Gastrocnemius medialis (tissue), 4 donors: ENCODE measurements at regions of chr6 and their contacts with region 1.

Region 1: DNA sequence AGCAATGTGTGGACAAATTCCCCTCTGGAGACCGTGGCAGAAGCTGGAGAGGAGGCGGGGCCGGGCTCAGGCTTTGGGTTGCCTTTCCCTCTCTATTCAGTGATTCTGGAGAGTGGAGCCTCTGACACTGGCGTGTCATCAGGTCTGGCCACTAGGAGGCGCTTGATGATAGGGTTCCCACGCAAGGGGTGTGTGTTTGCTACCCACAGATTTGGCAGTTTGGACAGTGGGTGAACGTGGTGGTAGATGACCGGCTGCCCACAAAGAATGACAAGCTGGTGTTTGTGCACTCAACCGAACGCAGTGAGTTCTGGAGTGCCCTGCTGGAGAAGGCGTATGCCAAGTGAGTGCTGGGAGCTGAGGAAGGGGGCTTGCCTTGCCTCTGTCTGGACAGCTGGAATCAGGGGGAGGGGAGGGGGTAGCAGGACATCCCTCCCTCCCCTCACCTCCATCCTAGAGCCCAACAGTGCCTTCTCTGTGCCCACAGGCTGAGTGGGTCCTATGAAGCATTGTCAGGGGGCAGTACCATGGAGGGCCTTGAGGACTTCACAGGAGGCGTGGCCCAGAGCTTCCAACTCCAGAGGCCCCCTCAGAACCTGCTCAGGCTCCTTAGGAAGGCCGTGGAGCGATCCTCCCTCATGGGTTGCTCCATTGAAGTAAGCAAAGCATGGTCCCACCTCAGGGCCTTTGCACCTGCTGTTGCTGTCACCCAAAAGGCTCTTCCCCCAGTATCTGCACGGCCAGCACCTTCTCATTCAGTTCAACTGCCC is 14.3 kb downstream of the CAPN11 start:
- DNase-seq: peak; percentile 65 to 80
- ATAC-seq: peak; percentile 95 to 96
- H3K4me3 ChIP-seq: no peak overlapping the region
- H3K27ac ChIP-seq: no peak overlapping the region
- H3K4me1 ChIP-seq: peaks cover 0 to 7% of the 10 kb centered on the region in 2 donors
- H3K27me3 ChIP-seq: no peaks in the 10 kb centered on the region
- CTCF ChIP-seq: peak; percentile 85 to 96 (median 92)
- POLR2A ChIP-seq: no peak

Region 2: DNA sequence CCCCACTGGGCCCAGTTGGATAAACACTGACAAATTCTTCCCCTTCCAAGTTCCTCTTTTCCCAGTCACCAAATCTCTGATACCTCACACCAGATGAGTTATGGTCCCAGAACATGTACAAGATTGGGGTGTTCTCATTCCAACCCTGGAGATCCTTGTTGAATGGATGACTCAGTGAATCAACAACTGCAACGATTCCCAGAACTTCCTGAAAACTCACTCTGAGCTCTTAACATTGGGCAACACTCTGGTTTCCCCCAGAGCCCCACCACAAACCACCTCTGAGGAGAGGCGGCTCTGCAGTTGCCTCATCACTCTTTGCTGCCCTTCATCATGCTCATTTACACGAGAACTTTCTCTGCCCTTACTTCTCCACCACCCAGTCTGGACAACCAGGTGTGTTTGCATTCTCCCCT is 160.8 kb before region 1 on chr6:
- in situ Hi-C with region 1: no loop called
- intact Hi-C with region 1: no loop called
- DNase-seq: no peak
- ATAC-seq: no peak
- H3K4me3 ChIP-seq: no peak overlapping the region
- H3K27ac ChIP-seq: peak overlapping the region in 1 of 4 donors; percentile 93
- H3K4me1 ChIP-seq: peaks cover 22 to 26% of the 10 kb centered on the region in 2 donors
- H3K27me3 ChIP-seq: no peaks in the 10 kb centered on the region
- CTCF ChIP-seq: no peak
- POLR2A ChIP-seq: no peak

Region 3: DNA sequence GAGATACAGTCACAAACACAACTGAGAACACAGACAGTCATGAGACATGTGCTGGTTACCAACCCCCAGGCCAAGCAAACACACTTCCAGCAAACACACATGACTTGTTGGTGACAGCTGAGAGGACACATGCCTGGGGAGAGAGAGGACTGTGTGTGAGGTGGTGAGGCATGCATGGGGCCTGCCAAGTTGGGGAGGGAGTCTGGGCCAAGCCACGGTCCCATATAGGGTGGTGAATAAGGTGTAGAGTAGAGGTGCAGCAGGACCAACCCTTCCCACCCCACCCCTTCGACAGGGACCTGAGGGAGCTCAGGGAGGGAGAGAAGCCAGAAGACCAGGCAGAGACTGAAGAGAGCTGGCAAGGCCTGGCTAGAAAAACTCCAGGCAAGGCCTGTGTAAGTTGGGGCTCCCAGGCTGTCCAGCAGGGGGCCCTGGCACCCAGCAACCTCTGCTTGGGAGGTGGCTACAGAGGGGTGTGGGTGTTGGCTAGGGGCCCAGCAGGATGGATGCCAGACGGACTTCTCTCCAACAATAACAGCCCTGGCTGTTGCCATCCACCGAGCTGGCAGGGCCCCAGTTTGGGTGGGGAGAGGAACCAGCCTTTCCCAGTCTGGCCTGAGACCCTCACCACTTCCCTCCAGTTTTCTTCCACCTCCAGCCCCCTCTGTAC is 48.5 kb after region 1 on chr6:
- in situ Hi-C with region 1: no loop called
- intact Hi-C with region 1: loop called (anchors 5 kb)
- DNase-seq: peak; percentile 94 to 96
- ATAC-seq: peak; percentile 77 to 79
- H3K4me3 ChIP-seq: peak overlapping the region in 2 of 4 donors; percentile 21 to 62
- H3K27ac ChIP-seq: peak overlapping the region; percentile 95 to 99 (median 98)
- H3K4me1 ChIP-seq: peaks cover 71 to 88% of the 10 kb centered on the region in 2 donors
- H3K27me3 ChIP-seq: no peaks in the 10 kb centered on the region
- CTCF ChIP-seq: peak; percentile 51 to 89 (median 72)
- POLR2A ChIP-seq: peak; percentile 49 to 58

Region 4: DNA sequence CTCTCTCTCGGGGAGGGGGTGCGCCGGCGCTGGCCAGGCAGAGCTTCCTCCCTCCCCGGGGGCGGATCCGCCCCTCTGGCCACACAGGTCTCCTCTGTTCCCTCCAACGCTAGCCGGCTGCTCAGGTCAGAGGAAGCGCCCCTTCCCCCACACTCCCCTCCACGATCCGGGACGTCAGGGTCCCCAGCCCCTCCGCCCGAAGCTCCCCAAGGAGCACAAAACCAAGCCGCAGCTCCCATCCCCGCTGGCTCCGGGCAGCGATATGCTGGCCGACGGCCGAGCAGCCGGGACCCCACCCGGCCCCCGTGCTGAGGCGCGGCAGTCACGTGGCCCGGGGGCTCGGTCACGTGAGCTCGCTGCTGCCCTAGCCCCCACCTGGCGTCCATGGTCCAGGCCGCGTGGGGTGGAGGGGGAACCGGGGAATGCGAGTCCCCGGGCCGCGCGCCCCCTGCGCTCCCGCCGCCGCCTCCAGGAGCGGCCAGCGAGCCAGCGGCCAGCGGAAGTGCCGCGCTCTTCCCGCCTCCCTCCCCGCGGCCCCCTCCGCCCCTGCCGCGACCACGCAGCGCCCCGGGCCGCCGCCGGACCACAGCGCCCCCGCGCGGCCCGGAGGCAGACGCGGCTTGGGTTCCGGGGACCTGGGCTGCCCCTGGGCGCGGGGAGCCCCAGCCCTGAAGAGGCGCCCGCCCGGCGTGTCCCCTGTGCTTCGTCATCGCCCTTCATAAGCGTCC is 84.3 kb after region 1 on chr6 and contains the start of gene SLC35B2:
- in situ Hi-C with region 1: no loop called
- intact Hi-C with region 1: loop called (anchors 1 kb)
- DNase-seq: peak in 1 of 2 donors; percentile 58
- ATAC-seq: peak; percentile 73 to 81
- H3K4me3 ChIP-seq: peak within 1 kb of the TSS; percentile 77 to 99 (median 88)
- H3K27ac ChIP-seq: peak within 1 kb of the TSS; percentile 87 to 97 (median 92)
- H3K4me1 ChIP-seq: peaks cover 8 to 12% of the 10 kb centered on the region in 2 donors
- H3K27me3 ChIP-seq: no peaks in the 10 kb centered on the region
- CTCF ChIP-seq: peak; percentile 54 to 99 (median 90)
- POLR2A ChIP-seq: peak; percentile 75 to 77
- total RNA-seq, gene SLC35B2: 14.9 to 35.9 (median 21.4) TPM

Region 5: DNA sequence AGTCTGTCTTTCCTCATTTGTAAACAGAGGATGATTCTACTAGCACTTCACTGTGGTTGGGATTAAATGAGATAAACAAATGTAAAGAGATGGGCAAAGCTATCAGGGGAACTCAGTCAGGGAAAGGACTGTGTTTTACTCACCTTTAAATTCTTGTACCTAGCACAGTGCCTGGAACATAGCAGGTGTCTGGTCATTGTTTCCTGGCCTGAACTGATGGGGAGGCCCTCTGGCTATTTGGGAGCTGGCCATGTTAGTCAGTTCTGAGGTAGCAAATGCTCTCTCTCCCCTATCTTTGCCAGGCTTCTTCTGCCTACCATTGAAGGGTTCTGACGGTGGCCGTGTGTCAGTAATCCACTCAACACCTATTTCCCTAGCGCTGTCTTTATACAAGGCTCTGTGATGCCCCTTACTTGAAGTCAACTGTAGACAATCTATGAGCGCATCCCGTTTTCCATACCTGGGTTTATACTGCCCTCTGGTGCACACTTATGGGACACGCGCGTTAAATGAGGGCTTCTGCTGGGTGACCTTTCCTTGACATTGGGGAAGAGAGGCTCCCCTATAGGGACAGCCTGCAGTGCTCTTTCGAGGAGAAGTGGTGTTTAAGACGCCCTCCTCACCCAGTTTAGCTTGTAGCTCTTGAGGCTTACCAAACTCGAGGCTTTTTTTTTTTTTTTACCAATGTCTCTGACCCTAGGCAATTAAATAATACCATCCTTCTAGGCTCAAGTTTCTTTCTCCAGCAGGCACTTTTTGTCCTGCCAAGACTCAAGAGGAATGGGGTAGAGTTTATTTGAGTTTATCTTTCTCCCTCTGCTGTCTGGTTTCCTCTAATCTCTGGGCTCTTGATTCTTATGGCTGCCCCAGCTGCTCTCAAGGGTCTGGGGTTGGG is 165.6 kb after region 1 on chr6:
- in situ Hi-C with region 1: loop called in 2 of 4 experiments (anchors 25 kb)
- intact Hi-C with region 1: loop called (anchors 5 kb)
- DNase-seq: peak; percentile 13 to 40
- ATAC-seq: peak; percentile 75 to 93
- H3K4me3 ChIP-seq: no peak overlapping the region
- H3K27ac ChIP-seq: no peak overlapping the region
- H3K4me1 ChIP-seq: no peaks in the 10 kb centered on the region
- H3K27me3 ChIP-seq: peaks cover 12 to 20% (median 16%) of the 10 kb centered on the region in 3 donors
- CTCF ChIP-seq: peak; percentile 37 to 73 (median 68)
- POLR2A ChIP-seq: no peak